GM12878 (cell line): ENCODE measurements at regions of chr7 and their contacts with region 1.

Region 1: GRCh38 chr7:20064974-20065862 is 152.0 kb downstream of the MACC1 start:
- DNase-seq: peak; percentile 57
- ATAC-seq: peak; percentile 100
- H3K4me3 ChIP-seq: no peak overlapping the region
- H3K27ac ChIP-seq: no peak overlapping the region
- H3K4me1 ChIP-seq: peaks cover 11% of the 10 kb centered on the region
- H3K27me3 ChIP-seq: no peaks in the 10 kb centered on the region
- CTCF ChIP-seq: no peak
- EP300 ChIP-seq: no peak
- POLR2A ChIP-seq: no peak
- RAD21 ChIP-seq: no peak

Region 2: GRCh38 chr7:20030915-20031362 is 34.3 kb before region 1 on chr7:
- CTCF ChIA-PET with region 1: no interaction called
- POLR2A ChIA-PET with region 1: no interaction called
- RAD21 ChIA-PET with region 1: no interaction called
- SMC1A ChIA-PET with region 1: interaction called, 3 read pairs
- in situ Hi-C with region 1: no loop called
- intact Hi-C with region 1: loop called (anchors 5 kb)
- DNase-seq: peak; percentile 50
- ATAC-seq: peak; percentile 74
- H3K4me3 ChIP-seq: peak overlapping the region; percentile 35; the same call in 1 of the 2 replicates
- H3K27ac ChIP-seq: peak overlapping the region; percentile 54
- H3K4me1 ChIP-seq: peaks cover 19% of the 10 kb centered on the region
- H3K27me3 ChIP-seq: no peaks in the 10 kb centered on the region
- CTCF ChIP-seq: no peak
- EP300 ChIP-seq: 0 out of 4 replicates have a peak, but pooled peaks of 1 of the 2 experiments have one; percentile 7
- POLR2A ChIP-seq: no peak
- RAD21 ChIP-seq: no peak